Esophagus muscularis mucosa (tissue), 4 donors: ENCODE measurements at regions of chr1 and their contacts with region 1.

Region 1: DNA sequence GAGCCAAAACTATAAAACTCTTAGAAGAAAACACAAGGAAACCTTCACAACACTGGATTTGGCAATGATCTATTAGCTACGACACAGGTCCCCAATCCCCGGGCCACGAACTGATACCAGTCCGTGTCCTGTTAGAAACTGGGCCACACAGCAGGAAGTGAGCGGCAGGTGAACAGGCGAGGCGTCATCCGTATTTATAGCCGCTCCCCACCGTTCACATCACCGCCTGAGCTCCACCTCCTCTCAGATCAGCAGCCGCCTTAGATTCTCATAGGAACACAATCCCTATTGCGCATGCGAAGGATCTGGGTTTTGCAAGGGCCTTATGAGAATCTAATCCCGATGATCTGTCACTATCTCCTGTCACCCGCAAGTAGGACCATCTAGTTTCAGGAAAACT is 11.9 kb downstream of the TFB2M start:
- DNase-seq: no peak
- H3K4me3 ChIP-seq: no peak overlapping the region
- H3K27ac ChIP-seq: no peak overlapping the region
- H3K4me1 ChIP-seq: no peaks in the 10 kb centered on the region
- H3K27me3 ChIP-seq: no peaks in the 10 kb centered on the region
- CTCF ChIP-seq: no peak
- EP300 ChIP-seq: no peak
- POLR2A ChIP-seq: no peak

Region 2: DNA sequence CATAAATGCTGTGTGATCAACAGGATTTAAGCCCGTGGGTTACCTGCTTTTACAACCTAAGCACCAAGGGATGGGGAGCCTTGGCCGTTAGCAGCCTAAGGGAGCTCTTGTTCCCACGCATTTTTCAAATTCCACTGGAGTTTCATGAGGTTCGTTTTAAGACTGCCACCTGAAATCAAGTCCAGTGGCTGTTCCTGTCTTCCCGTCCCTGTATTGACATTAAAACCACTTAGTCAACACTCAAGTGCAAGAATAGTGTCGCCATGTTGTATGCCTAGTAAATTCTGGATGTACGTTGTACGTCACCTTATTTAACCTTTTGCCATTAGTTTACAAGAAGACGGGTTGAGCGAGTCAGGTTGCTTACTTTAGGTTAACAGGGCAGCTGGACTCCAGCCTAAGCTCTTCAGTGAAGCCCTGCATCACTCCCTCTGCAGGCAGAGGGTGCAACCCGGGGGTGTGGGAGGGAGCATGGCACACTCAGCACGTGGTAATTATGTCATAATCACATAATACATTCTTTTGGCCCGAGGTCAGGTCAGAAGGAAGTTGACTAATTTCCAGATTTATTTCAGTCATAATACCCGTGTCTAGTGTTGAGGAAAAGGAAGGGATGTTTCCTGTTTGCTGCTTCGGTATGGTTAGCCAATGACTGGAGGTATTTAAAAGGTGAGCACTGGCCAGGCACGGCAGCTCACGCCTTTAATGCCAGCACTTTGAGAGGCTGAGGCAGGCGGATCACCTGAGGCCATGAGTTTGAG is 54.6 kb after region 1 on chr1:
- intact Hi-C with region 1: no loop called
- DNase-seq: no peak
- H3K4me3 ChIP-seq: peak overlapping the region in 1 of 4 donors; percentile 15
- H3K27ac ChIP-seq: peak overlapping the region; percentile 75 to 87 (median 80)
- H3K4me1 ChIP-seq: peaks cover 47 to 66% (median 64%) of the 10 kb centered on the region in 4 donors
- H3K27me3 ChIP-seq: no peaks in the 10 kb centered on the region
- CTCF ChIP-seq: peak in 2 of 3 experiments; percentile 23 to 47
- EP300 ChIP-seq: peak; percentile 35
- POLR2A ChIP-seq: no peak

Region 3: DNA sequence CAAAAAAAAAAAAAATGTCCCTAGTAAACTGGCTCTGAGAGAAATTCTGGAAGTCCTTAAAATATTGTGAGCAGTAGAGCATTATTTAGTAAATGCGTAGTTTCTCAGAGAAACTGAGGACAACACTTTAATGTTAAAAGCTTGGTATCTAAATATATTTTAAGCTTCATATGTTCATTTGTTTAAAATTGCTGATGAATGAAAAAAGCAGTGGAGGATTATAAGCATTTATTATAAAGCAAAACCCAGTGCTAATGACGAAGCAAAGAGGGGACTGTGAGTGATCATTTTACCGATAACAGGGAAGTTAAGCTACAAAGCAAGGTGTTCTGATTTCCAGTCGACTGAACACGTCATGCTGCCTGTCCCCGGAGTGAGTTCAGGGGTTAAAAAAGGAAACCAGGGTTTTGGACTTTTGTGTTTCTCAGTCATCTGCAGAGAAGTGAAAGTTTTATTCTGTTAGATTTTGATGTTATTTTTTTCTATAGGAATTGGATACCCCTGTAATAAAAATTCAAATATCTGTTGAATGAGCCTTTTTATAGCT is 105.5 kb after region 1 on chr1:
- intact Hi-C with region 1: loop called (anchors 10 kb)
- DNase-seq: no peak
- H3K4me3 ChIP-seq: no peak overlapping the region
- H3K27ac ChIP-seq: no peak overlapping the region
- H3K4me1 ChIP-seq: peaks cover 0 to 4% (median 0%) of the 10 kb centered on the region in 4 donors
- H3K27me3 ChIP-seq: no peaks in the 10 kb centered on the region
- CTCF ChIP-seq: no peak
- EP300 ChIP-seq: no peak
- POLR2A ChIP-seq: no peak

Region 4: GRCh38 chr1:246733704-246734103 is 179.5 kb after region 1 on chr1:
- intact Hi-C with region 1: no loop called
- DNase-seq: no peak
- H3K4me3 ChIP-seq: no peak overlapping the region
- H3K27ac ChIP-seq: no peak overlapping the region
- H3K4me1 ChIP-seq: no peaks in the 10 kb centered on the region
- H3K27me3 ChIP-seq: no peaks in the 10 kb centered on the region
- CTCF ChIP-seq: no peak
- EP300 ChIP-seq: no peak
- POLR2A ChIP-seq: no peak